HAP-1 (cell line): ENCODE measurements at regions of chr9 and their contacts with region 1.

Region 1: GRCh38 chr9:135085830-135086546 is 1.5 kb upstream of the OLFM1 start:
- DNase-seq: peak; percentile 15 to 71
- H3K4me3 ChIP-seq: no peak overlapping the region
- H3K4me1 ChIP-seq: no peaks in the 10 kb centered on the region
- H3K27me3 ChIP-seq: no peaks in the 10 kb centered on the region

Region 2: GRCh38 chr9:135347096-135347860 is 261.3 kb after region 1 on chr9:
- in situ Hi-C with region 1: loop called (anchors 5 kb)
- DNase-seq: no peak
- H3K4me3 ChIP-seq: no peak overlapping the region
- H3K4me1 ChIP-seq: no peaks in the 10 kb centered on the region
- H3K27me3 ChIP-seq: no peaks in the 10 kb centered on the region

Region 3: DNA sequence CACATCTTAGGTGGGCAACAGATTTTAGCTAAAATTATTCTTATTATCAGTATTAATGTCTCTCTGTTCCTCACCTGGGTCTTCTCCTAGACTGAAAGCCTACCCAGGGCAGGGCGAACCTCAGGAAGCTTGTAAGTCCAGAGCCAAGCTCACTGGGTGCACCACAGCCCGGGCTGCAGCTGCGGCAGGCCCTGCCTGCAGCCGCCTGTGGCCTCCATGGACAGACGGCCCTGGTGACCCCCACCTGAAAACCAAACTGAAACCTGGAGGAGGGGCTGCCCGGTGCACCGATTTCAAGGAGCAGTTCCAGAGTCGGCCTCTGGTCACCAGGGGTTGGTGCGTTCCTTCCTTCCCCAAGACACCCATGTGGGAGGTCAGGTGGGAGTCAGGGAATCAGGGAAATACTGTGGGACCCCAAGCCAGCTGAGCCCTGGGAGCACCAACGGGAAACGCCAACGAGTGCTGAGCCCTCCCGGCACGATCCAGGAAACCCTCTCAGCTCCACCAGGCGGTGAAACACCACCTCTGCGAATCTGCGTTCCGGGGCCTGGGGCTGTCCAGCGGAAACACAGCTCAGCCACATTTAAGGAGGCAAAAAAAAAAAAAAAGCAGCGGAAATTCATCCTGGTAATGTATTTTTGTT is 325.0 kb after region 1 on chr9:
- in situ Hi-C with region 1: loop called (anchors 5 kb)
- DNase-seq: no peak
- H3K4me3 ChIP-seq: no peak overlapping the region
- H3K4me1 ChIP-seq: no peaks in the 10 kb centered on the region
- H3K27me3 ChIP-seq: no peaks in the 10 kb centered on the region